GM18951 (cell line): ENCODE measurements at regions of chr2 and their contacts with region 1.

Region 1: GRCh38 chr2:136135921-136136906 is 18.3 kb upstream of the CXCR4 start:
- POLR2A ChIP-seq: no peak

Region 2: GRCh38 chr2:135913727-135914365 is 222.4 kb before region 1 on chr2:
- in situ Hi-C with region 1: loop called (anchors 10 kb)
- POLR2A ChIP-seq: no peak

Region 3: DNA sequence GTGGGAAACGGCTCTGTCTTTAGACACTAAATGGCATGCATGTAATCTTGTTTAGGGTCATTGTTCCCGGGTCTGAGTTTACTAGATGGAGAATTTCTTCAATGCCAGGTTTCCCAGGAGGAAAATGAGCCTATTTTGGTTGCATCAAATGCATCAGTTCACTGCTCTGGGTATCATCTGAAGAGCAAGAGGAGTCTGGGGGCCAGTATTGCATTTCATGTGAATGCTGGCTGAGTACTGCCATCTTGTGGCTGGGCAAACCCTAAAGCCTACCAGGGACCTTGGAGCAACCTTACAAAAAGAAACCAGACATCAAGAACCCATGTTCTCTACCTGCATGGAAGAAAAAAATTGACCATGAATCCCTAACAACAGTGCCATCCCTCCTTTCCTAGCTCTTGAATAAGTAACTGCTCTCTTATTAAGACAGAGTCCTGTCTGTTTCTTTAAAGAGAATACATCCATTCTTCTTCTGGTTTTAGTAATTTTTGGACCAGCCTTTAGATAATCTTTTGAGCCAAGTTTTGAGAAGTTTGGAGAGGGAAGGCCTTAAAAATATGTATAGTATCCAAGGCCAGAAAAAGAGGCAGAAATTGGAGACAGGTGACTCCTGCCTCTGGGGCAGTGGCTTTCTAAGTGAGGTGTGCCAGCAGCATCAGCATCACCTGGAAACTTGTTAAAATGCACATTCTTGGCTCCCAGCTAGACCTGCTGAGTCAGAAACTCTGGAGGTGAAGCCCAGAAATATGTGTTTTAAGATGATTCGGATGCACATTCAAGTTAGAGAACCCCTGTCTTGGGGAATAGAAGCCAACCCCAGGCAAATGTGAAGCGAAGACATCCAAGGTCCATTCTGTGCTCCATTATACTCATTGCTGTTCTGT is 242.7 kb after region 1 on chr2:
- in situ Hi-C with region 1: loop called (anchors 5 kb)
- POLR2A ChIP-seq: no peak